Activated T-helper 1 cell treated with anti-CD3 and anti-CD28 coated beads, Interleukin-12 subunit alpha, Interleukin-12 subunit beta, Interleukin-2, Interleukin-4 antibody, amounts not matched to agents 30 ng/mL and 10 ng/mL and 1 ng/mL, durations not matched to agents 14 hours and 24 hours and 36 hours (primary cell): ENCODE measurements at regions of chr5 and their contacts with region 1.

Region 1: DNA sequence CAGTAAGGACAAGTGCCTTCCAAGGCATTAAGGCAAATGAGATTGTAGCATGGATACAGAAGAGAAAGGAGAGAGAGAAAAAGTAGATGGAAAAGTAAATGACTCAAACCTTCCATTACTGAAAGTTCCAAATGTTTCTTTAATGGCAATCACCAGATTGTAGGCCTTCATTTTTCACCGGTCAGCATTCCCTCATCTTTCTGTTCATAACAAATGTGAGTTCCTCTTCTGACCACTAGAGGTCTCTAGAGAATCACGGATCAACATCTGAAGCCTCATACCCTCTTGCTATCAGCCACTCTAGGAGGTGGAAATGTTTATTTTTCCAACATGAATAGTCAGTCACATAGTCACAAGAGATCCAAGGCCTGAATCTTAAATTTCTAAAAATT is 73.6 kb upstream of the RPS23 start:
- DNase-seq: no peak
- H3K4me3 Mint-ChIP-seq: no peak overlapping the region
- H3K27ac Mint-ChIP-seq: peak overlapping the region; percentile 42
- H3K4me1 Mint-ChIP-seq: peaks cover 71% of the 10 kb centered on the region
- H3K27me3 Mint-ChIP-seq: no peaks in the 10 kb centered on the region

Region 2: GRCh38 chr5:82031220-82032119 is 320.3 kb before region 1 on chr5:
- intact Hi-C with region 1: no loop called
- DNase-seq: no peak
- H3K4me3 Mint-ChIP-seq: no peak overlapping the region
- H3K27ac Mint-ChIP-seq: no peak overlapping the region
- H3K4me1 Mint-ChIP-seq: no peaks in the 10 kb centered on the region
- H3K27me3 Mint-ChIP-seq: no peaks in the 10 kb centered on the region

Region 3: GRCh38 chr5:82312373-82312856 is 39.3 kb before region 1 on chr5:
- intact Hi-C with region 1: loop called (anchors 1 kb)
- DNase-seq: peak; percentile 25
- H3K4me3 Mint-ChIP-seq: no peak overlapping the region
- H3K27ac Mint-ChIP-seq: no peak overlapping the region
- H3K4me1 Mint-ChIP-seq: peaks cover 24% of the 10 kb centered on the region
- H3K27me3 Mint-ChIP-seq: no peaks in the 10 kb centered on the region

Region 4: GRCh38 chr5:82406205-82406773 is 54.5 kb after region 1 on chr5:
- intact Hi-C with region 1: no loop called
- DNase-seq: no peak
- H3K4me3 Mint-ChIP-seq: no peak overlapping the region
- H3K27ac Mint-ChIP-seq: no peak overlapping the region
- H3K4me1 Mint-ChIP-seq: no peaks in the 10 kb centered on the region
- H3K27me3 Mint-ChIP-seq: no peaks in the 10 kb centered on the region

Region 5: DNA sequence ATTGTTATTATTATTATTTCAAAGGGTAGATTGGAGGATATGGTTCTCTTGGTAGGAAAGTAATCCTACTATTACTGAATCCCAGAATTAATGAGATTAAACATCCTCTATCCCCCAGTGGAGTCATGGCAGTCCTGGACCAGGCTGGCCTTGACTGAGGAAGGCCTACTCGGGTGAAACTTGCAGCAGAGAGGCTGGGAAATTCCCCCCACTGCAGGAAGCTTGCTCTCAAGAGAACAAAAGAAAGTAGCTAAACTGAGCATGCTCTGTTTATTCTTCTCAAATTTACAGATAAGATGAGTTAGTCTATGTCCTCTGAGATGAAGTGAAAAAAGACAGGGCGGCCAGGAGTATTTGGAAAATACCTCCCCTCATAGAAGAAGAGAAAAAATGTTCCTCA is 160.3 kb after region 1 on chr5:
- intact Hi-C with region 1: loop called (anchors 5 kb)
- DNase-seq: peak; percentile 46
- H3K4me3 Mint-ChIP-seq: no peak overlapping the region
- H3K27ac Mint-ChIP-seq: no peak overlapping the region
- H3K4me1 Mint-ChIP-seq: peaks cover 13% of the 10 kb centered on the region
- H3K27me3 Mint-ChIP-seq: no peaks in the 10 kb centered on the region

Region 6: DNA sequence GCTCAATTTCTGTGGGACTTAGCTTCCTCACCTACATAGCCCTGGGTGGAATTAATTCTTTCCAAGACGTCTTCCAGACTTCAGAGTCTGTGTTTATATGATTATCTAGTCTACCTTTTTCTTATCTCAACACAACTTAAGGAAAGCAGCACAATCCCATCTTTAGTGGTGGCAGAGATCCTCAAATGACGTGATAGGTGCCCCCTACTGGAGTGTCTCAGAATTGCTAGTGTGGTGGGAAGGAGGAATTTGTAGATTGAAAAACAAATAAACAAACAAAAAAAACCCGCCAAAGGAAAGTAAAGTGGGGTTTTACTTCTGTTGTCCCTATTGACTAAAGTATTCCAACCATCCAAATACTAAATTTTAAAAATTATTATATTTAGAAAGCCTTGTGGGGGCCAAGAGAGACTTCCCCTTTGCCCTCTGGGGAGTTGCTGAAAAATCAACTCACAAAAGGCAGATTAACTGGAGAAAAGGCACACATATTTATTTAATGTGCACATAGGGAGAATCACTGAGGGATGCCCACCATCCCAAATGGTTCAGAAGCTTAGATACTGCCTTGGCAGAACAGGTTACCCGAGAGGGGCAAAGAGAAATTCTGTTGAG is 442.2 kb after region 1 on chr5:
- intact Hi-C with region 1: loop called (anchors 1 kb)
- DNase-seq: no peak
- H3K4me3 Mint-ChIP-seq: no peak overlapping the region
- H3K27ac Mint-ChIP-seq: no peak overlapping the region
- H3K4me1 Mint-ChIP-seq: no peaks in the 10 kb centered on the region
- H3K27me3 Mint-ChIP-seq: peaks cover 6% of the 10 kb centered on the region

Region 7: DNA sequence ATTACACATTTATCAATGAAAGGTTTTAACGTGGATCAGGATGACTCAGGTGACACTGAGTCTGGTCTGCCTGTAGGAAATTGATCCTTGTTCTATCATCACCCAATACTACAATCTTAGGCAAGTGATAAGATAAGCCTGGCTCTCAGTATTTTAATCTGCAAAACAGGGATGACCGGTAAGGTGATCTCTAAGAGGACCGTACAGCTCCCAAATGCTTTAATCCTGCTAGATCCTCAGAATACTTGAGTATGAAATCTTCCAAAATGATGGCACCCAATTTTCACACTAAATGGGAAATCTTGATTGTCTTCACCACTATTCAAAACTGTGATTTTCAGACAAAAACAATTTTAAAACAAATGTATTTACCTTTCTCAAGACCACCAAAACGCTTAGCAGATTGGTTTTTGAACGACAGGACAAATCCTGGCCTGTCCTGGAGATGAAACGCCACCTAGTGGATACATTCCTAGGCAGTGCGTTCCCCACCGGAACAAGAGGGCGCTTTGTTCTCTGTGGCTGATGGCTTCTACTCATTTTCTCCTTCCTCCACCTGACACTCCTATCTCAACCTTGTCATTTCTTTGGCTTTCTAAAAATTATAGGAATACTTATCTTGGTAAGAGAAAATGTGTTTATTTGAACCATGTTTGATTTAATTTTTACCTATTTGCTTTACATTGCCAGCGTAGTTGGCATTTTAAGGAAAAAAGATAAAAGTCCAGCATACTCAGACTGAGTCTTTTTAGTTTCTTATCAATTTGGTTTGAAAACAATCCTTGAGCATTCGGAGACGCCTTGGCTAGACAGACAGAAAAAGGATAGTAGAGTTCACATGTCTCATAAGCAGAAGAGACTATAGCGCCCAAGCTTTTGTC is 1078.6 kb after region 1 on chr5:
- intact Hi-C with region 1: loop called (anchors 1 kb)
- DNase-seq: peak; percentile 38
- H3K4me3 Mint-ChIP-seq: no peak overlapping the region
- H3K27ac Mint-ChIP-seq: no peak overlapping the region
- H3K4me1 Mint-ChIP-seq: no peaks in the 10 kb centered on the region
- H3K27me3 Mint-ChIP-seq: peaks cover 2% of the 10 kb centered on the region

Region 8: GRCh38 chr5:83564069-83564749 is 1212.5 kb after region 1 on chr5:
- intact Hi-C with region 1: loop called (anchors 1 kb)
- DNase-seq: no peak
- H3K4me3 Mint-ChIP-seq: no peak overlapping the region
- H3K27ac Mint-ChIP-seq: no peak overlapping the region
- H3K4me1 Mint-ChIP-seq: no peaks in the 10 kb centered on the region
- H3K27me3 Mint-ChIP-seq: peaks cover 20% of the 10 kb centered on the region